ENCODE measurements at regions of chr3 and their contacts with region 1.

Region 1: GRCh38 chr3:189630767-189631372 is 319 bp upstream of the TP63 start:
- DNase-seq: peak; percentile 47 to 60
- ATAC-seq: peak; percentile 69 to 81
- H3K4me3 ChIP-seq: peak overlapping the region; percentile 47 to 58 (median 55)
- H3K27ac ChIP-seq: peak overlapping the region; percentile 84 to 89 (median 86)
- H3K4me1 ChIP-seq: peaks cover 49 to 56% of the 10 kb centered on the region in 2 donors
- H3K27me3 ChIP-seq: no peaks in the 10 kb centered on the region
- CTCF ChIP-seq: no peak
- POLR2A ChIP-seq: peak; percentile 27 to 86

Region 2: GRCh38 chr3:189355481-189356201 is 275.2 kb before region 1 on chr3:
- in situ Hi-C with region 1: no loop called
- intact Hi-C with region 1: loop called (anchors 10 kb)
- DNase-seq: peak; percentile 33 to 46
- ATAC-seq: peak; percentile 96
- H3K4me3 ChIP-seq: peak overlapping the region in 1 of 4 donors; percentile 29
- H3K27ac ChIP-seq: peak overlapping the region; percentile 72 to 81 (median 80)
- H3K4me1 ChIP-seq: peaks cover 19 to 38% of the 10 kb centered on the region in 2 donors
- H3K27me3 ChIP-seq: no peaks in the 10 kb centered on the region
- CTCF ChIP-seq: no peak
- POLR2A ChIP-seq: no peak

Region 3: GRCh38 chr3:189673535-189673934 is 42.7 kb after region 1 on chr3:
- in situ Hi-C with region 1: no loop called
- intact Hi-C with region 1: no loop called
- DNase-seq: no peak
- ATAC-seq: no peak
- H3K4me3 ChIP-seq: no peak overlapping the region
- H3K27ac ChIP-seq: no peak overlapping the region
- H3K4me1 ChIP-seq: peaks cover 6 to 14% of the 10 kb centered on the region in 2 donors
- H3K27me3 ChIP-seq: no peaks in the 10 kb centered on the region
- CTCF ChIP-seq: no peak
- POLR2A ChIP-seq: no peak

Region 4: DNA sequence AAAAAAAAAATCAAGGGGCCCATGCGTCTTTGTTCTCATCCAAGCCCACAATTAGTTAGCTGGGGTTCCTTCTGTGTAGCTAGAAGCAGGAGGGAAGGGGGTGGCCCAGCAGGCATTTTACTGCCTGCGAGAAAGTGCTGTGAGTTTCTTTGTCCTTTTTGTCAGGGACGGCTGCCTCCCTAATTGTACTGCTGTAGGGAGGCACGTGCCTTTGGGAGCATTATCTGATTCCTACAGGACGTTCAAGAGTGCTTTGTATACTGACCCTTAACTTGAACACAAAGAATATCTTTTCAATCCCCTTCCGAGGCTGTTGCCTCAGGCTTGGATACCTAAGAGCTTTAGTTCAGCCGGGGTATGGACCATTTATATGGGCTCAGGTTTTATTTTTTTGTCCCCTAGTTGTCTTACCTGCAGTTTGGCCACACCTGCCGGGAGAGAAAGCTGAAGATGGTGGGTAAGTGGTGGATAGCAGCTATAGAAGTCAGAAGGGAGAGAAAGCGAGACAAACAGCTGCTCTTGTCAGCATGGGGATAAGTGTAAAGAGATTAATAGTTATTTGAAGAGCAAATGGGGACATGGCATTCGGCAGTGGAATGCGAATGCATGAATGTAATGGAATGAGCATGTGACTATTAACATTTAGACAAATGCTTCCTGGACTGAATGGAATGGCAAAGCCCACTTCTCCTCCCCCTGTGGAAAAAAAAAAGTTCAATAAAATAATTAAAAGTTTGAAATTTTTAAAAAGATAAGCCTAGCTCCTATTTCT is 175.5 kb after region 1 on chr3:
- in situ Hi-C with region 1: loop called in 1 of 4 experiments (anchors 25 kb)
- intact Hi-C with region 1: loop called (anchors 2 kb)
- DNase-seq: no peak
- ATAC-seq: peak in 1 of 2 donors; percentile 26
- H3K4me3 ChIP-seq: no peak overlapping the region
- H3K27ac ChIP-seq: peak overlapping the region; percentile 73 to 95 (median 92)
- H3K4me1 ChIP-seq: peaks cover 8 to 24% of the 10 kb centered on the region in 2 donors
- H3K27me3 ChIP-seq: no peaks in the 10 kb centered on the region
- CTCF ChIP-seq: no peak
- POLR2A ChIP-seq: no peak

Region 5: DNA sequence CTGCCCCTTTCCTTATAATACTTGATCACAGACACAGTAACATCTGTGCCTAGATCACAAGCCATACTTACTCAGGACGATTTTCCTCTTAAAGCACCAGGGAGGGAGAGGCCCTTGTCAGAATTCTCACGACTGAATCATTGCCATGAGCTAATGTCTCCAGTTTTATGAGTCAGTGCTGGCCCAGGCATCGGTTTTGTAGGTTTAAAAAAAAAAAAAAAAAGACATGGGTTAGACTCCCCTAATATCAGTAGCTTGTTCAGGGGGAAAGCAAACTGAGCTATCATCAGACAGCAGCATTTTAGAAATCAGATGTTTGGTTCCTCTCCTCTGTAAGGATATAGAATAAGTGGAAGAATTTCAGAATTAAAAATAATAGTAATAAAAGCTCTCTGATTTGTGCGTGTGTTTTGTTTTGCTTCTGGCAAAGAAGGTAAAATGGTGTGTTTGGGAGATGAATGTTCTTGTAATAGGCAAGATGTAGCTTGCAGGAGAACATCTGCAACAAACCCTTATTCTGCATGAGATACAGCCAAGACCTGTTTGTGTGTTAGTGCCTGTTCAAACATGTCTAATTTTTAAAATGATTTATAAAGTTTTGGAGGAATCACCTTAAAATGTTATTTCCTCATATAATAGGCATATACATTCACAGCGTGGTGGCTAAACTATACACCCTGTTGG is 193.9 kb after region 1 on chr3:
- in situ Hi-C with region 1: loop called in 1 of 4 experiments (anchors 25 kb)
- intact Hi-C with region 1: no loop called
- DNase-seq: no peak
- ATAC-seq: peak in 1 of 2 donors; percentile 20
- H3K4me3 ChIP-seq: no peak overlapping the region
- H3K27ac ChIP-seq: peak overlapping the region in 2 of 4 donors; percentile 30 to 40
- H3K4me1 ChIP-seq: peaks cover 3 to 13% of the 10 kb centered on the region in 2 donors
- H3K27me3 ChIP-seq: no peaks in the 10 kb centered on the region
- CTCF ChIP-seq: no peak
- POLR2A ChIP-seq: no peak

Region 6: DNA sequence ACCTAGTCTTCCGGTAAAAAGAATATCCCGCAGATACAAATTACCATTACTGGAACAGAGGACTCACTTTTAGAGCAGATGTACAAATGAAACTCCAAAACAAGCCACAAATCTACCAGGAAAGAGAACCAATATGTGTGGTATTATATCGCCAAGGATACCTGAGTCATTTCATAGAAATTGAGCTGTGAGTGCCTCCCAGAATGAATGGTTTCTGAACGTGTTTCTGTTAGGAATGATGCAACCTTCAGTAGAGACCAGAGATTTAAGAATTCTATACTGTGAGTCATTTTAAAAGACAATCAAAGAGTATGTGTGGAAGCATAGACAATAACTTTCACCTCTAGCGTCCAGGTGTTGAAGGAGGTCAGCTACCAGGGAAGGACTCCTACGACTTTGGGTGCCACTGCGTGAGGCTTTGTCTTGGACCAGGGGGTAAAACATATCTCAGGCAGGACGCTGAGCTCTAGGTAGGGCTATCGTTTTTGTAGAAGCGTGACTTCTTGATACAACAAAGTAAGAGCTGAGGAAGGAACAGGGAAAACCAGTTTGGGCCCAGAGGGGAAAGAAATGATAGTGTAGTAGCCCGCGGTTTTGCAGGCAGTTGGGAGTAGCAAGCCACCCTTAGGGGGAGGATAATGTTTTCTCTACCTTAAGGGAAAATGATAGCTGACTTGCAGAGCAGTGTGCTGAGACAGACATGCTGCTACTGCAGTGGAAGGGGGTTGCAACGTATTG is 210.8 kb after region 1 on chr3:
- in situ Hi-C with region 1: loop called in 1 of 4 experiments (anchors 10 kb)
- intact Hi-C with region 1: no loop called
- DNase-seq: no peak
- ATAC-seq: no peak
- H3K4me3 ChIP-seq: no peak overlapping the region
- H3K27ac ChIP-seq: peak overlapping the region; percentile 64 to 87 (median 76)
- H3K4me1 ChIP-seq: peaks cover 20% of the 10 kb centered on the region in 2 donors
- H3K27me3 ChIP-seq: no peaks in the 10 kb centered on the region
- CTCF ChIP-seq: no peak
- POLR2A ChIP-seq: no peak

Region 7: GRCh38 chr3:189947948-189948723 is 317.3 kb after region 1 on chr3:
- in situ Hi-C with region 1: no loop called
- intact Hi-C with region 1: no loop called
- DNase-seq: no peak
- ATAC-seq: peak in 1 of 2 donors; percentile 59
- H3K4me3 ChIP-seq: no peak overlapping the region
- H3K27ac ChIP-seq: no peak overlapping the region
- H3K4me1 ChIP-seq: peaks cover 5 to 9% of the 10 kb centered on the region in 2 donors
- H3K27me3 ChIP-seq: no peaks in the 10 kb centered on the region
- CTCF ChIP-seq: peak in 4 of 5 experiments; percentile 47 to 67 (median 53)
- POLR2A ChIP-seq: no peak

Measured in gastrocnemius medialis (tissue), 4 donors.